Sigmoid colon (tissue), 7 donors: ENCODE measurements at regions of chr21 and their contacts with region 1.

Region 1: DNA sequence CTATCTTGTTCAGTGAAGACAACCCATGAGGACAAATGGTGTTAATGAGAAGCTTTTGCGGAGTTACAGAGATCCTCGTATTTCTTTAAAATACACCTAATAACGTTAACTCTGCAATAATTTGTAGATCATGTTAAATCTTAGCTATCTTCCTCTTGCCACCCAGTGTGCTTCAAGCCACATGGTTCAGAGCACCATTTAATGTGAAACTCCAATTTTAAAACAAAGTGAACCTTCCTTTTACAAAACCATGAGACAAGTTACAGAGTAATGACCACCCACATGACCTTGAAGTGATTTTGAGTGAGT is 1.7 kb upstream of the KCNE2 start:
- DNase-seq: no peak
- H3K4me3 ChIP-seq: no peak overlapping the region
- H3K27ac ChIP-seq: no peak overlapping the region
- H3K4me1 ChIP-seq: peaks cover 0 to 4% (median 2%) of the 10 kb centered on the region in 4 donors
- H3K27me3 ChIP-seq: no peaks in the 10 kb centered on the region
- CTCF ChIP-seq: no peak
- EP300 ChIP-seq: no peak
- POLR2A ChIP-seq: no peak

Region 2: GRCh38 chr21:33642896-33643657 is 719.0 kb before region 1 on chr21:
- intact Hi-C with region 1: no loop called
- DNase-seq: peak; percentile 69
- H3K4me3 ChIP-seq: peak overlapping the region; percentile 70 to 99 (median 92)
- H3K27ac ChIP-seq: peak overlapping the region; percentile 94 to 97 (median 96)
- H3K4me1 ChIP-seq: peaks cover 0 to 35% (median 29%) of the 10 kb centered on the region in 4 donors
- H3K27me3 ChIP-seq: no peaks in the 10 kb centered on the region
- CTCF ChIP-seq: no peak
- EP300 ChIP-seq: no peak
- POLR2A ChIP-seq: no peak

Region 3: DNA sequence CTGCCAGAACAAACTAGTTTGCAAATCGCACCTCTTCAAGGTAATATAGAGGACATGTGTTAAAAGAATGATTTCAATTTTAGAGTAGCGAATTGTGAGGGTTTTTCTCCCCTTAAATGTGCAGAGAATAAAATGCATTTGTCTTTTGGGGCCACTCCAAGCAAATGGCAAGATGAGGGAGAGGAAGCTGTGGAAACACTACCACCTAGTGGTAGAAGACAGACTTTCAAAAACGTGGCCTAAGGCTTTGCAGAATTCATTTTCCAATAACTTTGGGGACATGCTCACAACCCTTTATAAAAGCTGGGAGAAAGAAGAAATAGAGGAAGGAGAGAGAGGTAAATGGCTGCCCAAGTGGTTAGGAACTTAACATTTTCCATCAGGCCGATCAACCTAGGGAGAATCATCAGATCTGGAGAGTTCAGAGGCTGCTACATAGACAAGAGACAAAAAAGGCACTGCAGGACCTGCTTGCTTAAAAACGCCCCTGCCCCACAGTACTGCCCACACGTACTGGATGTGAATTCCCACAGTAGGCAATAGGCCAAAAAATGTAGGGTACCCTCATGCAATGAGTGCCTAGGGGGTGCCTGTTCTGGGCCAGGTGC is 268.6 kb after region 1 on chr21:
- intact Hi-C with region 1: loop called (anchors 1 kb)
- DNase-seq: no peak
- H3K4me3 ChIP-seq: no peak overlapping the region
- H3K27ac ChIP-seq: no peak overlapping the region
- H3K4me1 ChIP-seq: no peaks in the 10 kb centered on the region
- H3K27me3 ChIP-seq: no peaks in the 10 kb centered on the region
- CTCF ChIP-seq: peak; percentile 64 to 80 (median 72)
- EP300 ChIP-seq: no peak
- POLR2A ChIP-seq: no peak